HepG2 (cell line): ENCODE measurements at regions of chr1 and their contacts with region 1.

Region 1: GRCh38 chr1:55284852-55285251 is 69.7 kb upstream of the USP24 start:
- DNase-seq: no peak
- ATAC-seq: peak; percentile 57; the same call in 2 of the 3 replicates
- H3K4me3 ChIP-seq: no peak overlapping the region
- H3K27ac ChIP-seq: no peak overlapping the region
- H3K4me1 ChIP-seq: peaks cover 7% of the 10 kb centered on the region; the same call in 1 of the 2 replicates
- H3K27me3 ChIP-seq: no peaks in the 10 kb centered on the region; a peak in 1 of 5 replicates
- CTCF ChIP-seq: peak; percentile 64
- EP300 ChIP-seq: no peak
- POLR2A ChIP-seq: no peak
- RAD21 ChIP-seq: 0 out of 2 replicates have a peak, but pooled peaks have one; percentile 37

Region 2: DNA sequence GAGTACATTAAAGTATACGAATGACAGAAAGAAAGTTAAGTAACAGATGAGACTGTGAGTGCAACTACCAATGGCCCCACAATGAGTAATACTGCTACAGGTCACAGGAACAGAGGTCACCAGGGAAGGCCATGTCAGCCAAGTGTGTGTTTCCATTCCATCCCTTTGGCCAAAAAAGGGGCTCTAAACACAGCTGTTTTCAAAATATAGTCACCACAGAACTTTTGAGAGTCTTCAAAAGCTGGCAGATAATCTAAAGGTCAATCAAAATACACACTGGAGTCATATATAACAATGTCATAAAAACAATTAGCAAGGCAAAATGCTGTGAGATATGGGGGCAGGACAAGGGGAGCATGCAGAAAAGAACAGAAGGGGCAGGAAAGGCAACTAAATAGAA is 79.9 kb before region 1 on chr1:
- CTCF ChIA-PET with region 1: no interaction called
- POLR2A ChIA-PET with region 1: no interaction called
- in situ Hi-C with region 1: no loop called
- intact Hi-C with region 1: no loop called
- DNase-seq: peak; percentile 15
- ATAC-seq: peak; percentile 76
- H3K4me3 ChIP-seq: no peak overlapping the region
- H3K27ac ChIP-seq: peak overlapping the region; percentile 36
- H3K4me1 ChIP-seq: peaks cover 38% of the 10 kb centered on the region
- H3K27me3 ChIP-seq: no peaks in the 10 kb centered on the region
- CTCF ChIP-seq: no peak
- EP300 ChIP-seq: 0 out of 4 replicates have a peak, but pooled peaks of 1 of the 2 experiments have one; percentile 18
- POLR2A ChIP-seq: no peak
- RAD21 ChIP-seq: no peak

Region 3: GRCh38 chr1:55310505-55310971 is 25.7 kb after region 1 on chr1:
- CTCF ChIA-PET with region 1: no interaction called
- POLR2A ChIA-PET with region 1: no interaction called
- in situ Hi-C with region 1: no loop called
- intact Hi-C with region 1: no loop called
- DNase-seq: no peak
- ATAC-seq: no peak
- H3K4me3 ChIP-seq: no peak overlapping the region
- H3K27ac ChIP-seq: no peak overlapping the region
- H3K4me1 ChIP-seq: no peaks in the 10 kb centered on the region
- H3K27me3 ChIP-seq: peaks cover 0 to 7% of the 10 kb centered on the region in 2 experiments; a peak in 1 of 5 replicates
- CTCF ChIP-seq: no peak
- EP300 ChIP-seq: no peak
- POLR2A ChIP-seq: no peak
- RAD21 ChIP-seq: no peak

Region 4: DNA sequence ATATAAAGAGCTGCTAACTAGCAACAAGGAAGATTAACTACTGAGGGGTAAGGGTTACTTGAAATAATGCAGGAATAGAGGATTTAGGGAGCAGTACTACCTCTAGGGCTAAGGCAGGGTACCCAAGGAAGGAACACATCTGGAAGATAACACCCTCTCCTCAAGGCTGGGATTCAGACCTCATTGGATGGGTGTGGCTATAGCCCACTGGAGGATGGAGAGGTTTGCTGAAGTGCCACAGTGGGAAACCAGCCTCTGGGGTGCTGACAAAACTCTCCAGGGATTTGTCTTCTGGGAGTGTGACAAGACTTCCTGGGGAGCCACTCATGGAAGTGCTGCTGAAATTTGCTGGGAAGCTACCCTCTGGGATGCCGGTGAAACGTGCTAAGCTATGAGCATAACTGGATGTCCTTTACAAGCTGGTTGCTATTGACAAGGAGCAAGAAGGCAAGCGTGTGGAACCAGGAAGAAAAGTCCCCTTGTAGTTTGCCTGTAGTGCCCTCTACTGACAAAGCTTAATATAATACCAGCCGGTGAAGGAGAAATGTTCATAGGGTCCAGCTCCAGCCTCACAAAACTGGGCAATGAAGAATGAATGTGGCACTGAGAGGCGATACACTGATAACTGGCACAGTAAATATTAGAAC is 53.1 kb after region 1 on chr1:
- CTCF ChIA-PET with region 1: interaction called, 9 read pairs
- POLR2A ChIA-PET with region 1: no interaction called
- in situ Hi-C with region 1: no loop called
- intact Hi-C with region 1: loop called (anchors 1 kb)
- DNase-seq: peak; percentile 35
- ATAC-seq: peak; percentile 83
- H3K4me3 ChIP-seq: no peak overlapping the region
- H3K27ac ChIP-seq: no peak overlapping the region
- H3K4me1 ChIP-seq: peaks cover 13% of the 10 kb centered on the region
- H3K27me3 ChIP-seq: peaks cover 0 to 11% of the 10 kb centered on the region in 2 experiments; a peak in 3 of 5 replicates
- CTCF ChIP-seq: peak; percentile 77
- EP300 ChIP-seq: no peak
- POLR2A ChIP-seq: no peak
- RAD21 ChIP-seq: peak; percentile 50; the same call in 1 of the 2 replicates

Region 5: DNA sequence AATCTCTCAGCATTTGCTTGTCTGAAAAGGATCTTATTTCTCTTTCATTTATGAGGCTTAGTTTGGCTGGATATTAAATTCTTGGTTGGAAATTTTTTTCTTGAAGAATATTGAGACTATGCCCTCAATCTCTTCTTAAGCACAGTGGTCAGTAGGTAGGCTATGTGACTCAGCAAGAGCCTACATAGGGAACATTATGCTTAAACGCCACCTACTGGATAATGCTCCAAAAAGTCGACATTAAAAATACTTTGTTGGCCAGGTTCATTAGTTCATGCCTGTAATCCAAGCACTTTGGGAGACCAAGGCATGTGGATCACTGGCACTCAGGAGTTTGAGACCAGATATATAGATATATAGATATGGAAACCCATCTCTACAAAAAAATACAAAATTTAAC is 608.3 kb after region 1 on chr1:
- CTCF ChIA-PET with region 1: interaction called, 4 read pairs
- POLR2A ChIA-PET with region 1: no interaction called
- in situ Hi-C with region 1: loop called (anchors 10 kb)
- intact Hi-C with region 1: loop called (anchors 2 kb)
- DNase-seq: peak; percentile 59
- ATAC-seq: peak; percentile 66
- H3K4me3 ChIP-seq: no peak overlapping the region
- H3K27ac ChIP-seq: no peak overlapping the region
- H3K4me1 ChIP-seq: no peaks in the 10 kb centered on the region; the same call in 1 of the 2 replicates
- H3K27me3 ChIP-seq: no peaks in the 10 kb centered on the region; a peak in 1 of 5 replicates
- CTCF ChIP-seq: peak; percentile 63
- EP300 ChIP-seq: no peak
- POLR2A ChIP-seq: no peak
- RAD21 ChIP-seq: peak; percentile 36; the same call in 1 of the 2 replicates

Region 6: DNA sequence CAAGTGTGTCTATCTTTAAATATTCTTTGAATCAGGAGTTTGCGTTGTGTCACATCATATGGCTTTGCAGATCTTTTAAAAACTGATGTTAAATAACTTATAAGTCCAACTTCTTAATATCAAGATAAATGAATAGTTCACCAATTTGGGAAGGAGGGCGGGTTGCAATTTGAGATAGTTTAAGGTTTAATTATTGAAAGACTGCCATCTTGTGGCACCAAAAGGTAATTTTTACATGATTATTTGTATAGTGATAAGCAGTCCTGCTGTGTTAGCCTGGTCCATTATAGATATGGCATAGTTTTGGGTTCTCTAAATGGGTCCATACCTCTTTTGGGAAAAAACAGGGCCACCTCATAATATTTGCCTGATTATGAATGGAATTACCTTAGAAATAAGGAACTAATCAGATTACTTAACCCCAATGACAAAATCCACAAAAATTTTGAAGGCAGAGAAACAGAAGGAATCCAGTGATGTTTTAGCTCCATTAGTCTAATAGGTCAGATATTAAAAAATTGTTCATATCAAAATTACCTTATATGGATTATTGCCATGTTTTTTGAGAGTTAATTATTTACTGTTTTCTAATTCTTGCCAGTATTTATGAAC is 1424.5 kb after region 1 on chr1:
- CTCF ChIA-PET with region 1: no interaction called
- POLR2A ChIA-PET with region 1: no interaction called
- in situ Hi-C with region 1: loop called (anchors 10 kb)
- intact Hi-C with region 1: no loop called
- DNase-seq: peak; percentile 56
- ATAC-seq: peak; percentile 76
- H3K4me3 ChIP-seq: no peak overlapping the region
- H3K27ac ChIP-seq: no peak overlapping the region
- H3K4me1 ChIP-seq: no peaks in the 10 kb centered on the region
- H3K27me3 ChIP-seq: no peaks in the 10 kb centered on the region
- CTCF ChIP-seq: peak; percentile 65
- EP300 ChIP-seq: no peak
- POLR2A ChIP-seq: no peak
- RAD21 ChIP-seq: peak; percentile 28; the same call in 1 of the 2 replicates

Region 7: GRCh38 chr1:56821140-56821797 is 1536.4 kb after region 1 on chr1:
- CTCF ChIA-PET with region 1: no interaction called
- POLR2A ChIA-PET with region 1: no interaction called
- in situ Hi-C with region 1: loop called (anchors 10 kb)
- intact Hi-C with region 1: no loop called
- DNase-seq: peak; percentile 73
- ATAC-seq: peak; percentile 63
- H3K4me3 ChIP-seq: peak overlapping the region in 1 of 3 experiments; percentile 32; a peak in 2 of 6 replicates
- H3K27ac ChIP-seq: peak overlapping the region; percentile 52
- H3K4me1 ChIP-seq: peaks cover 67% of the 10 kb centered on the region
- H3K27me3 ChIP-seq: no peaks in the 10 kb centered on the region
- CTCF ChIP-seq: peak; percentile 97
- EP300 ChIP-seq: no peak
- POLR2A ChIP-seq: no peak
- RAD21 ChIP-seq: peak; percentile 94